T-cell (primary cell): ENCODE measurements at regions of chr7 and their contacts with region 1.

Region 1: GRCh38 chr7:73606801-73607691 is 17.3 kb downstream of the MLXIPL start:
- DNase-seq: peak in 34 of 35 experiments; percentile 15 to 81 (median 57)
- ATAC-seq: peak; percentile 75 to 91 (median 80)
- H3K4me3 ChIP-seq: no peak overlapping the region
- H3K4me3 Mint-ChIP-seq: no peak overlapping the region
- H3K27ac ChIP-seq: no peak overlapping the region
- H3K27ac Mint-ChIP-seq: no peak overlapping the region
- H3K4me1 ChIP-seq: peaks cover 0 to 7% of the 10 kb centered on the region in 2 experiments
- H3K4me1 Mint-ChIP-seq: peaks cover 0 to 2% (median 0%) of the 10 kb centered on the region in 3 donors
- H3K27me3 ChIP-seq: peaks cover 0 to 64% of the 10 kb centered on the region in 2 experiments
- H3K27me3 Mint-ChIP-seq: peaks cover 13 to 32% of the 10 kb centered on the region in 2 donors

Region 2: DNA sequence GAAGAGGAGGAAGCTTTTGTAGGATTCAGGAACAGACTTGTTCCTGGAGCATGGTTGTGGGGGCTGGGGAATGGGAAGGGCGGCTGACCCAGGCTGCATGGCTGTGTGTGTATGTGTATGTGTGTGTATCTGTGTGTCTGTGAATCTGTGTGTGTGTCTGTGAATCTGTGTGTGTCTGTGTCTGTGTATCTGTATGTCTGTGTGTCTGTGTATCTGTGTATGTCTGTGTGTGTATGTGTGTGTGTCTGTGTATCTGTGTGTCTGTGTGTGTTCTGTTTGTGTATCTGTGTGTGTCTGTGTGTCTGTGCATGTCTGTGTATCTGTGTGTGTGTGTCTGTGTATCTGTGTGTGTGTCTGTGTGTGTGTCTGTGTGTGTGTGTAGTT is 119.0 kb after region 1 on chr7:
- CTCF ChIA-PET with region 1: interaction called, 6 to 12 read pairs
- POLR2A ChIA-PET with region 1: no interaction called
- DNase-seq: no peak
- ATAC-seq: peak; percentile 8 to 53 (median 18)
- H3K4me3 ChIP-seq: no peak overlapping the region
- H3K4me3 Mint-ChIP-seq: no peak overlapping the region
- H3K27ac ChIP-seq: no peak overlapping the region
- H3K27ac Mint-ChIP-seq: no peak overlapping the region
- H3K4me1 ChIP-seq: peaks cover 0 to 5% of the 10 kb centered on the region in 2 experiments
- H3K4me1 Mint-ChIP-seq: no peaks in the 10 kb centered on the region
- H3K27me3 ChIP-seq: peaks cover 2 to 33% of the 10 kb centered on the region in 2 experiments
- H3K27me3 Mint-ChIP-seq: peaks cover 10 to 13% of the 10 kb centered on the region in 2 donors

Region 3: DNA sequence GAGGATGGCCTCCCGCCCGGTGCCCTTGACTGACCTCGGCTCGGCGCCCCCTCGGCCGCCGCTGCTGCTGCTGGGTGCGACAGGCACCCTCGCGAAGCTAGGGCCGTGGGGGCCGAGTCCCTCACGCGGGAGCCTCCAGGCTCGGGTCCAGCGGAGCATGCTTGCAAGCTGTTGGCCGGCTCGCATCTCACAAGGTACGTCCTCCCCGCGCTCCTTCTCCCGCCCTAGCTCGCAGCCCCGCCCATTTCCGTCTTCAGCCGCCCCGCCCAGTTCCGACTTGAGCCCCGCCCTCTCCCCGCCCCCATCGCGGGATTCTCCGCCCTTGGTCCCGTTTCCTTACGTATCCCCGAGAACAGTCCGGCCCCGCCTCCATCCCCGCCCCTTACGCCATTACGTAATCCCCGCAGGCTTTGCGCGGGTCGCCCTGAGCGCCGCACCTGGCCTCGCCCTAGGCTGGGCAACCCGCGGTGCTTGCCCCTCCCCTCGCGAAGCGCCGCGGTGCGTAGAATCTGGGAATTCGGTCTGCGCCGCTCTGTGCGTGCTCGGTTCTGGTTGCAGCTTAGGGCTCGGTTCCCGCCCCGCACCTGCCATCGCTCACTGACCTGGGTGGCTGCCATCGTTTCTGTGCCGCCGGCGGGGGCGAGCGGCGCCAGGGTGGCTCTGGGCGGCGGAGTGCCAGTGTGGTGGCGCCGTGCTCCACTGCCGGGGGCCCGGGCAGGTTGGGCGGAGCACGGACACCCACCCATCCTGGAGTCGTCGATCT is 131.7 kb after region 1 on chr7 and contains the start of gene ABHD11:
- CTCF ChIA-PET with region 1: interaction called, 7 to 10 read pairs
- POLR2A ChIA-PET with region 1: no interaction called
- DNase-seq: peak; percentile 89 to 100 (median 96)
- ATAC-seq: peak; percentile 86 to 90 (median 89)
- H3K4me3 ChIP-seq: peak within 1 kb of the TSS; percentile 75 to 94
- H3K4me3 Mint-ChIP-seq: peak within 1 kb of the TSS; percentile 89 to 91 (median 90)
- H3K27ac ChIP-seq: peak within 1 kb of the TSS; percentile 81
- H3K27ac Mint-ChIP-seq: peak within 1 kb of the TSS; percentile 88 to 93
- H3K4me1 ChIP-seq: peaks cover 2 to 28% of the 10 kb centered on the region in 2 experiments
- H3K4me1 Mint-ChIP-seq: peaks cover 11 to 25% (median 17%) of the 10 kb centered on the region in 3 donors
- H3K27me3 ChIP-seq: peaks cover 0 to 2% of the 10 kb centered on the region in 2 experiments
- H3K27me3 Mint-ChIP-seq: no peaks in the 10 kb centered on the region
- total RNA-seq, gene ABHD11: 14.5 to 24.3 (median 18.8) TPM